ENCODE measurements at regions of chr3 and their contacts with region 1.

Region 1: GRCh38 chr3:141738022-141738890 is at the start of gene RNF7:
- DNase-seq: peak; percentile 97
- H3K4me3 ChIP-seq: peak within 1 kb of the TSS; percentile 78 to 99 (median 90)
- H3K27ac ChIP-seq: peak within 1 kb of the TSS; percentile 95 to 98 (median 96)
- H3K4me1 ChIP-seq: peaks cover 0 to 38% (median 36%) of the 10 kb centered on the region in 4 donors
- H3K27me3 ChIP-seq: no peaks in the 10 kb centered on the region
- CTCF ChIP-seq: peak; percentile 74 to 83 (median 78)
- EP300 ChIP-seq: peak in 2 of 4 donors; percentile 46 to 56
- POLR2A ChIP-seq: peak; percentile 59 to 64
- total RNA-seq, gene RNF7: 87.2 to 195 (median 132) TPM

Region 2: DNA sequence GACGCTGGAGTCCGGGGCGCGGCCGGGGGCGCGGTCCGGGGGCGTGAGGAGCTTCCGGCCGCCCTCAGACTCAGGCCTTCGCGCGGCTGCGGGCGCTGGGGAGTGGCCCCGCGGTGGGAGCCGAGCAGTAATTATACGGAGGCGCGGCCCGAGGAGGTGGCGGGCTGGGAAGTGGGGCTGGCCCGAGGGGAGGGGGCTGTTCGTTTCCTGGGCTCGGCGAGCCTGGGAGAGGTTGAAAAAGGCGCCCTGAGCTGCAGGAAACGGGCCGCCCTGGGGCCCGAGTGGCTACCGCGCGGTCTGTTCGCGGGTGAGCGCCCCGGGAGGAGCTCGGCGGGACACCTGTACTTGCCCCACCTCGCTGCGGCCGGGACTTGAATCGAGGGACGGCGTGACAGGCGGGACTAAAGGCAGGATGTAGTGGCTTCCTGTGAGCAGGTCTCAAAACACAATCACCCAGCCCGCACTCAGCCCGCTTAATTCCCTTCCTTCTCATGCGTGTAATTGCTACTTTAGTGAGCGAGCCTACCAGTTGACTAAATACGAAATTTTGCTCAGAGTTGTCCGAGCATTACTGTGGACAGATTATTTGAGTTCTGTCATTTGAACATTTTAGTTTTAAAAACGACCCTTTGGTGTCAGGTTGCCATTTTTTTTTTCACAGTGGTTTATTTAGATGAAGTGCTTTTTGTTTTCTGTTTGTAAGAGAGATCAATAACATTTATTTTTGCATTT is 250.6 kb before region 1 on chr3:
- intact Hi-C with region 1: loop called (anchors 10 kb)
- DNase-seq: peak; percentile 85
- H3K4me3 ChIP-seq: peak overlapping the region; percentile 60 to 97 (median 91)
- H3K27ac ChIP-seq: peak overlapping the region; percentile 92 to 98 (median 96)
- H3K4me1 ChIP-seq: peaks cover 0 to 24% (median 11%) of the 10 kb centered on the region in 4 donors
- H3K27me3 ChIP-seq: no peaks in the 10 kb centered on the region
- CTCF ChIP-seq: peak in 1 of 4 experiments; percentile 9
- EP300 ChIP-seq: no peak
- POLR2A ChIP-seq: peak in 1 of 2 donors; percentile 39

Region 3: GRCh38 chr3:141575879-141576743 is 162.1 kb before region 1 on chr3:
- intact Hi-C with region 1: loop called (anchors 2 kb)
- DNase-seq: no peak
- H3K4me3 ChIP-seq: peak overlapping the region in 2 of 4 donors; percentile 23 to 26
- H3K27ac ChIP-seq: peak overlapping the region in 3 of 4 donors; percentile 10 to 58 (median 44)
- H3K4me1 ChIP-seq: peaks cover 0 to 8% (median 0%) of the 10 kb centered on the region in 4 donors
- H3K27me3 ChIP-seq: no peaks in the 10 kb centered on the region
- CTCF ChIP-seq: peak; percentile 12 to 70 (median 38)
- EP300 ChIP-seq: no peak
- POLR2A ChIP-seq: no peak

Region 4: DNA sequence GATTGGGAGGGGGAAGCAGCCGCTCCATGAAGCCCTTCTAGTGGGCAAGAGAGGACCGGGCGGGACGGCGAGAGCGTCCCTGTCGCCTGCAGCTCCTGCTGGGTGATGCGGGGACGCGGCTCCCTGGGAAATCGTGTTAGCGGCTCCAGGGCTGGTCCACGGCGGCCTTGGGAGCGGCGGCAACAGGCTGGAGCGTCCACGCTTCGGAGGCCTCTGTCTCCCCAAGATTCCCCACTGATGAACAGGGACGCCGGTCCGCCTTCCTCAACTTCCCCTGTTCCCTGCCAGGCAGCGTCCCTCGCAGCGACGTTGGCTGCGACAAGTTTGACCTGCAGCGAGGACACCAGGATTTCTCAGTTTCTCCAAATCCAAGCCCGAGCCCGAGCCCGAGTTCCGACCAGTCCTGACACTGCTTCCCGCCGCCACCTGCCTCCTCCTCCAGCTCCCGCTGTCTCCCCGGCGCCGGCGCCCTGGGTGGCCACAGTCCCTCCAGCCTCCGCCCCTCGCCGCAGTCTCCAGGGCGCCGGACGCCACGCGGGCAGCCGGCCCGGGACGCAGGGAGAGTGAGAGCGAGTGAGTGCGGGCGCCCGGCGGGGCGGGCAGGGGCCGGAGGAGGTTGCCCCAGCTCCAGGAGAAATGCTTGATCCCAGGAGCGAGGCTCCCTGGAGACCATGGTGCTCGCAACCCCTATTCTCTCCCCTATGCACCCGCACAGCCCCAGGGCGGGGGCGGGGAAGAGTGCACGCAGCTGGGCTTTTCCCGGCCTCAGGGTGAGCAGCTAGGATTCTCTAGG is 78.2 kb before region 1 on chr3:
- intact Hi-C with region 1: loop called (anchors 5 kb)
- DNase-seq: peak; percentile 90
- H3K4me3 ChIP-seq: peak overlapping the region; percentile 53 to 73 (median 58)
- H3K27ac ChIP-seq: peak overlapping the region; percentile 64 to 94 (median 88)
- H3K4me1 ChIP-seq: peaks cover 0 to 52% (median 42%) of the 10 kb centered on the region in 4 donors
- H3K27me3 ChIP-seq: no peaks in the 10 kb centered on the region
- CTCF ChIP-seq: no peak
- EP300 ChIP-seq: no peak
- POLR2A ChIP-seq: peak; percentile 73 to 83

Region 5: GRCh38 chr3:141782454-141782853 is 44.2 kb after region 1 on chr3:
- intact Hi-C with region 1: no loop called
- DNase-seq: no peak
- H3K4me3 ChIP-seq: no peak overlapping the region
- H3K27ac ChIP-seq: no peak overlapping the region
- H3K4me1 ChIP-seq: no peaks in the 10 kb centered on the region
- H3K27me3 ChIP-seq: no peaks in the 10 kb centered on the region
- CTCF ChIP-seq: no peak
- EP300 ChIP-seq: no peak
- POLR2A ChIP-seq: no peak

Region 6: DNA sequence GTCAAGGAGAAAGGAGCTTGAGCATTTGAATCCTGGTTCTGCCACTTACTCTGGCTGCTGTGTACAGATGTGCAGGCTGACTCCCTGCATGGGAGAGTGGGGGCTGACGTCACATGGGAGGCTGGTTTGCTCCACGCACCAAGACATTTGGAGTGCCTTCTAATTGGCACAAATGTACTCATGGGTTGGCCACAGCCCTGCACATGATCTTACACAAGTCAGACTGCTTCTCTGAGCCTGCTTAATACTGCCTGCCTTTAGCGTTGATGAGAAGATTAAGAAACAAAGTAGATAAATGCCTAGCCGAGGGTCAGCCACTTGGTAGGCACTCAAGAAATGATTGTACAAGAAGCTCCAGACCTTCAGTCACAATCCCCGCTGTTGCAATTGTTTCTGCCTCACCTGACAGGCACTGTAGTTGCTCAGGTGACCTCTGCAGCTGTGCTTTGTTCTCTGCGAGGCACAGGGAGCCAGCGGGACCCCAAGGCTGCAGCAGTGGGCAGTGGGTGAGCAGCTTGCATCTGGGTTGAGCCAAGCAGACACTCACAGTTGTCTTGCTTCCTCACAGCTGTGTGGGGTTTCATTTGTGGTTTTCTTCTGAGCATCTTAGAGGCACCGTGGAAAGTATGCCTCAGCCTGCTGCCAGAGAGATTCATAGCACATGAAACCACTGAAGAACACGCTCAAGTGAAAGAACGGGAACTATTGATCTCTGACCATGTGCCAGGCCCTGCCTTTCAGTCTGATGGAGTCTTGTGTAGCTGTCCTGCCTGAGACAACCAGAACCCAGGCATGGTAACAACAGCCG is 58.0 kb after region 1 on chr3:
- intact Hi-C with region 1: loop called (anchors 5 kb)
- DNase-seq: peak; percentile 86
- H3K4me3 ChIP-seq: peak overlapping the region in 2 of 4 donors; percentile 44 to 46
- H3K27ac ChIP-seq: peak overlapping the region; percentile 78 to 86 (median 85)
- H3K4me1 ChIP-seq: peaks cover 0 to 47% (median 38%) of the 10 kb centered on the region in 4 donors
- H3K27me3 ChIP-seq: no peaks in the 10 kb centered on the region
- CTCF ChIP-seq: no peak
- EP300 ChIP-seq: peak in 2 of 4 donors; percentile 18 to 57
- POLR2A ChIP-seq: no peak

Region 7: DNA sequence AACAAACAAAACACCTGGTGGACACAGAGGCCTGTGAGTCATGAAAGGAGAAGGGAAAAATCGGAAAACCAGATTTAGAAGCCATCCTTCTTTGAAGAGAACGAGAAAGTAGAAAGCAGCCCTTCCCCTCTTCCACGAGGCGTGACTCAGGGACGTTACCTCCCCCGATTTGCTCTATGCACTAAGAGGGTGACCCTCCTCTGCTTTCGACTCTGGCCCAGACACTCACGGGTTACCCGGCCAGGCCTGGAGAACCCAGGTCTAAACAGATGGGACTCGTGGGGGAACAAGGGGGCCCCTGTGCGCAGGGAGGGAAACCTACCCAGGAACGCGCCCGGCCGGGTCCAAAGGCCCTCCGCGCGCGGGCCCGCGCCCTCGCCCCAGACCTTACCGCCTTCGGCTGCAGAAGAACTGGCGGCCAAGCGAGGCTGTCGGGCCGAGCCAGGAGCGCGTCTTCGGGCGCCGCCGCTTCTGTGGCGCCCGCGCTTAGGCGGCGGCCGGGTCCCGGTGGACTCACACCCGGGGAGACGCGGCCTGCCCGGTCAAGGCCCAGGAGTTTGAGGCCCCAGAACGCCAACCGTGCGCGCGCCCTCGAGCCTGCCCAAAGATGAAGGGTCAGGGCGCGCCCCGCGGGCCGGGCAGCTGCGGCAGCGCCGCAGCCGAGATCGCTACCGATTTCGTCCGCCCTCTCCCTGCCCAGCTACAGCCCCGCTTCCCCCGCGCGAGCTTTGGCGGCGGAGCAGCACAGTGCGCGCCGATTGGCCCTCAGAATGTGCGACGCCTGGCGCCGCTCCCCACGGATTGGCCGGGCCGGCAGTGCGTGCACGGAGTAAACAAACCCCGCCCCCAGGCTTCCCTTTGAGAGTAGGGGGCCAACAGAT is 410.8 kb after region 1 on chr3 and contains the start of gene TFDP2:
- intact Hi-C with region 1: loop called (anchors 10 kb)
- DNase-seq: peak; percentile 96
- H3K4me3 ChIP-seq: peak within 1 kb of the TSS; percentile 71 to 91 (median 76)
- H3K27ac ChIP-seq: peak within 1 kb of the TSS; percentile 85 to 97 (median 94)
- H3K4me1 ChIP-seq: peaks cover 0 to 47% (median 37%) of the 10 kb centered on the region in 4 donors
- H3K27me3 ChIP-seq: no peaks in the 10 kb centered on the region
- CTCF ChIP-seq: no peak
- EP300 ChIP-seq: no peak
- POLR2A ChIP-seq: peak; percentile 47 to 57
- total RNA-seq, gene TFDP2: 52.3 to 74.8 (median 61.4) TPM